A549 (cell line): ENCODE measurements at regions of chr21 and their contacts with region 1.

Region 1: DNA sequence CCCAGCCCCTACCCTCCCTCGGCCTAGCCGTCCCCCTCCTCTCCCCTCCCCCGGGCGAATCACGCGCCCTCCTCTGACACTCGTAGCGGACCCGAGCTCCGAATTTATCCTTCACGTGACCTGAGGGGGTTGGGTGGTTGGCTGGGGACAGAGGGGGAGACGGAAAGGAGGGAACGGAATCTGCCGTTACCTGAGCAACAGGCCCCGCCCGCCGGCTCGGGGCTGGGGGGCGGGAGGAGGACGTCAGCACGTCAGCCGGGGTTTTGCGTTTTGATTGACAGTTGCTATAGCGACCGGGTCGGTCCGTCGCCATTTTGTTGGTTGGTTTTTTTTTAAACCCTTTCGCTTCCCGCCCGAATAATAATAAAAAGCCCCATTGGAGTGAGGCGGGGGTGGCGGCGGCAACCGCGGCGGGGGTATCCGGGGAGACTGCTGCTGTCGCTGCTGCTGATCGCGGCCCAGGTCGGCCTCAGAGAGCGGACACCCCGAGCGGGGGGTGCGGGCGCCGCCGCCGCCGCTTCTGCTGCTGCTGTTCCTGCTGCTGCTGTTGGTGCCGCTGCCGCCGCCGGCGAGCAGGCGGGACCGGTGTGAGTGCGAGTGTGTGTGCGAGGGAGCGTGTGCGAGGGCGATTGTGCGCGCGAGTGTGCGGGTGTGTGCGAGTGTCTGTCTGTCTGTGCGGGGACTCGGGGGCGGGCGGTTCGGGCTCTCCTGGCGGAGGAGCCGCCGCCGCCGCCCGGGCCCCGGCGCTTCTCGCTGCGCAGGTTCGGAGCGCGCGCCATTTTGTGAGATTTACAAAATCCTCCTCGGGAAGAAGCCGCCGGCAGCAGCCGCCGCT is at the start of gene DYRK1A:
- DNase-seq: peak; percentile 85 to 98
- ATAC-seq: peak; percentile 82 to 87
- H3K4me3 ChIP-seq: peak within 1 kb of the TSS; percentile 79
- H3K27ac ChIP-seq: peak within 1 kb of the TSS; percentile 98 to 99
- H3K4me1 ChIP-seq: peaks cover 27% of the 10 kb centered on the region; the same call in 2 of the 3 replicates
- CTCF ChIP-seq: no peak
- EP300 ChIP-seq: no peak
- POLR2A ChIP-seq: peak; percentile 55
- RAD21 ChIP-seq: no peak
- polyA plus RNA-seq, gene DYRK1A: 29.4 and 33.5 TPM in 2 replicates

Region 2: DNA sequence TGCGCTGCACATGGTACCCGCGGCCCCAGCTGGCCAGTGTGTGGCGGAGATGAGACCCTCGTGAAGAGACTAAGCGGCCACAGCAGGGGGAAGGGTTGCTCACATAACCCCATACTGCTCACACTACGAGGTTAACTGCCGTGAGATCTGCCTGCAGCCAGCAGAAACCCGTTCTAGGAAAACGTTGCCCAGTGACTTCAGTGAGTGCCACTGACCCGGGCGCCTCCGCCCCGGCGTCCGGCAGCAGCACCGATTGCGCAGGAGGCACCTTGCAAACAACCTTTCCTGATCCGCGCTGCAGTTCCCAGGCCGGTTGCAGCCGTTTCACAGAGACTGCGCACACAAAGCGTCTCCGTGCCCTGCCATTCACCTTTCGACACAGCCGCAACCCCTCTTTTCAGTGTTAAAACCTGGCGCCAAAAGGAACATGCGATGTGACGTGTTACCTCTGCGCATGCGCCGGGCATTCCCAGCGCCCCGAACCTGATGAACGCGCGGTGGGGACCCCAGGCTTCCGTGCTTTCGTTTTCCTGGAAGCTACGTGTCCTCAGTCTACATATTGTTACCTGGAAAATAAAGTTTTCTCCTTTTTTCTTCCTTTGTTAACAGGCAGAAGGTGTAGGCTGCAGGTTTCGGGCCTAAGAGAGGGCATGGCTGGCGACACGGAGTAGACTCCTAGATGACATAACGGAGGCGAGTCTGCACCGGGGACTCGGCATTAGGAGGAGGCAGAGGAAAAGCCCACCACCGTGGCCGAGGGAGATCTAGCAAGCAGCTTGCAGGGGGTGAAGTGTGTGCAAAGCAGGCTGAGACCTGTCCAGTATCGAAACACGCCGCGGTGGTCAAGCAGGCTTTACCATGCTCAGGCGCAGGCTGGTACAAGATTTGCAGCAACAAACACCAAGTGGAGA is 108.5 kb before region 1 on chr21:
- CTCF ChIA-PET with region 1: no interaction called
- POLR2A ChIA-PET with region 1: interaction called, 10 read pairs
- DNase-seq: peak; percentile 38 to 84
- ATAC-seq: peak; percentile 82 to 90
- H3K4me3 ChIP-seq: peak overlapping the region; percentile 46
- H3K27ac ChIP-seq: peak overlapping the region; percentile 83 to 94
- H3K4me1 ChIP-seq: peaks cover 15% of the 10 kb centered on the region; the same call in 2 of the 3 replicates
- CTCF ChIP-seq: no peak
- EP300 ChIP-seq: no peak
- POLR2A ChIP-seq: peak; percentile 38; the same call in 1 of the 2 replicates
- RAD21 ChIP-seq: peak in 1 of 2 experiments; percentile 1; a peak in 1 of 5 replicates

Region 3: GRCh38 chr21:37267269-37268184 is 99.2 kb before region 1 on chr21 and contains the start of gene VPS26C:
- CTCF ChIA-PET with region 1: interaction called, 4 read pairs
- POLR2A ChIA-PET with region 1: interaction called, 38 read pairs
- DNase-seq: peak; percentile 58 to 98
- ATAC-seq: peak; percentile 95
- H3K4me3 ChIP-seq: peak within 1 kb of the TSS; percentile 69
- H3K27ac ChIP-seq: peak within 1 kb of the TSS; percentile 91 to 96
- H3K4me1 ChIP-seq: peaks cover 8% of the 10 kb centered on the region; the same call in 1 of the 3 replicates
- CTCF ChIP-seq: no peak
- EP300 ChIP-seq: no peak
- POLR2A ChIP-seq: peak; percentile 45; the same call in 1 of the 2 replicates
- RAD21 ChIP-seq: no peak; a peak in 1 of 5 replicates
- polyA plus RNA-seq, gene VPS26C: 29.5 and 32.0 TPM in 2 replicates

Region 4: GRCh38 chr21:37338671-37339551 is 27.8 kb before region 1 on chr21:
- CTCF ChIA-PET with region 1: no interaction called
- POLR2A ChIA-PET with region 1: interaction called, 17 read pairs
- DNase-seq: peak; percentile 81 to 93
- ATAC-seq: peak; percentile 100
- H3K4me3 ChIP-seq: peak overlapping the region; percentile 17; the same call in 2 of the 3 replicates
- H3K27ac ChIP-seq: peak overlapping the region; percentile 70 to 81
- H3K4me1 ChIP-seq: peaks cover 16% of the 10 kb centered on the region
- CTCF ChIP-seq: no peak
- EP300 ChIP-seq: no peak; a peak in 2 of 5 replicates
- POLR2A ChIP-seq: no peak
- RAD21 ChIP-seq: peak in 1 of 2 experiments; percentile 1; a peak in 1 of 5 replicates

Region 5: GRCh38 chr21:37435120-37435519 is 68.4 kb after region 1 on chr21:
- CTCF ChIA-PET with region 1: no interaction called
- POLR2A ChIA-PET with region 1: no interaction called
- DNase-seq: peak in 1 of 2 experiments; percentile 38
- ATAC-seq: peak in 1 of 2 experiments; percentile 61; a peak in 3 of 6 replicates
- H3K4me3 ChIP-seq: no peak overlapping the region
- H3K27ac ChIP-seq: no peak overlapping the region
- H3K4me1 ChIP-seq: peaks cover 6% of the 10 kb centered on the region; the same call in 1 of the 3 replicates
- CTCF ChIP-seq: no peak
- EP300 ChIP-seq: no peak
- POLR2A ChIP-seq: no peak
- RAD21 ChIP-seq: no peak